ENCODE measurements at regions of chr16 and their contacts with region 1.

Region 1: GRCh38 chr16:27549859-27550581 is at the starts of genes GTF3C1 and KATNIP:
- DNase-seq: peak; percentile 100
- H3K4me3 ChIP-seq: peak within 1 kb of the TSS; percentile 77 to 100 (median 95)
- H3K27ac ChIP-seq: peak within 1 kb of the TSS; percentile 73 to 84 (median 83)
- H3K4me1 ChIP-seq: peaks cover 31 to 38% of the 10 kb centered on the region in 2 donors
- H3K27me3 ChIP-seq: no peaks in the 10 kb centered on the region
- CTCF ChIP-seq: peak in 1 of 6 experiments; percentile 16
- POLR2A ChIP-seq: peak; percentile 88 to 92
- total RNA-seq, gene GTF3C1: 58.5 to 120 (median 112) TPM
- total RNA-seq, gene KATNIP: 41.3 to 82.8 (median 70.9) TPM

Region 2: GRCh38 chr16:27203429-27204231 is 346.4 kb before region 1 on chr16 and contains the start of gene KDM8:
- intact Hi-C with region 1: loop called (anchors 10 kb)
- DNase-seq: peak; percentile 99
- H3K4me3 ChIP-seq: peak within 1 kb of the TSS; percentile 43 to 56 (median 50)
- H3K27ac ChIP-seq: peak within 1 kb of the TSS; percentile 93 to 96 (median 96)
- H3K4me1 ChIP-seq: peaks cover 10 to 27% of the 10 kb centered on the region in 2 donors
- H3K27me3 ChIP-seq: no peaks in the 10 kb centered on the region
- CTCF ChIP-seq: no peak
- POLR2A ChIP-seq: peak in 1 of 2 donors; percentile 71
- total RNA-seq, gene KDM8: 5.6 to 14.9 (median 9.6) TPM

Region 3: DNA sequence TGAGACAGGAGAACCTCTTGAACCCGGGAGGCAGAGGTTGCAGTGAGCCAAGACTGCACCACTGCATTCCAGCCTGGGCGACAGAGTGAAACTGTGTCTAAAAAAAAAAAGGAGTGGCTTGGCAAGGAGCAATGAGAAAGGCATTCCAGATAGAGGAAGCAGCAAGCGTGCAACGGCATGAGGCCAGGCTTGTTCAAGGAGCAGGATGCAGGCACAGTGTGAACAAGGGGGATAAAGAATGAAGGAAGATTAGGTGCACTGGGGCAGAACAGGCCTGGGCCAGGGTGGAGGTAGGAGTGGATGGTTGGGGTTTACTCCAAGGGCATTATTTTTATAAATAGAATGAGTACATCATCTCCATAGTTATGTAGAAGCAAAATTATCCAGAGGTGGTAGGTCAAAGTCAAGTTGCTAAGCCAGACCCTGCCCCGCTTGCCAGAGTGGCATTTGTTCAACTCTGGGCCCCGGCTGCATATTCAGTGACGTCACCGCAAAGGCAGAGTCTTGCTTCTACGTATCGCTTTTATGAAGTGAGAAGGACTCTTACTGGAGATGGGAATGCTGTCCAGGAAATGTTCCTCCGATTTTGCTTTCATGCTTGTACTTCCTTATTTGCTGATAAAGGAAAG is 100.2 kb after region 1 on chr16:
- intact Hi-C with region 1: no loop called
- DNase-seq: peak in 1 of 2 donors; percentile 18
- H3K4me3 ChIP-seq: no peak overlapping the region
- H3K27ac ChIP-seq: no peak overlapping the region
- H3K4me1 ChIP-seq: no peaks in the 10 kb centered on the region
- H3K27me3 ChIP-seq: no peaks in the 10 kb centered on the region
- CTCF ChIP-seq: no peak
- POLR2A ChIP-seq: no peak

Measured in thyroid gland (tissue), 4 donors.